G401 (cell line): ENCODE measurements at regions of chr2 and their contacts with region 1.

Region 1: DNA sequence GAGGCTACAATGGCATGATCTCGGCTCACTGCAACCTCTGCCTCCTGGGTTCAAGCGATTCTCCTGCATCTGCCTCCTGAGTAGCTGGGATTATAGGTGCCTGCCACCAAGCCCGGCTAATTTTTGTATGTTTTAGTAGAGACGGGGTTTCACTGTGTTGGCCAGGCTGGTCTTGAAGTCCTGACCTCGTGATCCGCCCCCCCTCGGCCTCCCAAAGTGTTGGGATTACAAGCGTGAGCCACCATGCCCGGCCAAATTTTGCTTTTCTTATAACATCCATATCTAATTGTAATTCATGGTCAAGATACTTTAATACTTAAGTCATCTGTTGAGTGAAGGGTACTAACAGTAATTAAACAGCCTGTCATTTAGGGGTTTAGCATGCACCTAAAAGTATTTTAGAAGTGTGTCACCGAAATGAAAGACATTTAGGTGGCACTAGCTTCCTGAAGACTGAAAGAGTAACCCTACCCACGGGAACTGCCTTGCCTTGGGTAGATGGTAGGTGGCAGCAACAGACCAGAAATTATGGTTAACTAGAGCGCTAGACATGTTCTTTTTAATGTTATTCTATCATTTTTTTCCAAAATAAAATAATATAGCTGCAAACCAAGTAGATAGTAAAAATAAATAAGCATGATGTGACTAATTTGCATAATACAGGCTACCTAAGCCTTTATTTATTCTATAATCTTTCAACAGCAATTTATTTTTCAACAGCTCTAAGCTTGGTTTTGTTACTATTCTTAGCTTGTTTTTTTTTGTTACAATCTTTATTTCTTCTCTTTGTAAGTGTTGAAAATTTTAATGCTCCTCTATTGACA is 8.6 kb upstream of the ACYP2 start:
- DNase-seq: peak; percentile 84

Region 2: GRCh38 chr2:54206596-54206995 is 99.8 kb after region 1 on chr2:
- in situ Hi-C with region 1: loop called (anchors 10 kb)
- DNase-seq: peak; percentile 30